K562 (cell line): ENCODE measurements at regions of chr1 and their contacts with region 1.

Region 1: GRCh38 chr1:202716654-202717053 is 6.4 kb upstream of the SYT2 start:
- DNase-seq: no peak
- ATAC-seq: no peak
- H3K4me3 ChIP-seq: no peak overlapping the region
- H3K27ac ChIP-seq: no peak overlapping the region
- H3K4me1 ChIP-seq: no peaks in the 10 kb centered on the region
- H3K27me3 ChIP-seq: peaks cover 48 to 60% of the 10 kb centered on the region in 2 experiments
- CTCF ChIP-seq: no peak
- EP300 ChIP-seq: no peak
- POLR2A ChIP-seq: no peak
- RAD21 ChIP-seq: no peak

Region 2: DNA sequence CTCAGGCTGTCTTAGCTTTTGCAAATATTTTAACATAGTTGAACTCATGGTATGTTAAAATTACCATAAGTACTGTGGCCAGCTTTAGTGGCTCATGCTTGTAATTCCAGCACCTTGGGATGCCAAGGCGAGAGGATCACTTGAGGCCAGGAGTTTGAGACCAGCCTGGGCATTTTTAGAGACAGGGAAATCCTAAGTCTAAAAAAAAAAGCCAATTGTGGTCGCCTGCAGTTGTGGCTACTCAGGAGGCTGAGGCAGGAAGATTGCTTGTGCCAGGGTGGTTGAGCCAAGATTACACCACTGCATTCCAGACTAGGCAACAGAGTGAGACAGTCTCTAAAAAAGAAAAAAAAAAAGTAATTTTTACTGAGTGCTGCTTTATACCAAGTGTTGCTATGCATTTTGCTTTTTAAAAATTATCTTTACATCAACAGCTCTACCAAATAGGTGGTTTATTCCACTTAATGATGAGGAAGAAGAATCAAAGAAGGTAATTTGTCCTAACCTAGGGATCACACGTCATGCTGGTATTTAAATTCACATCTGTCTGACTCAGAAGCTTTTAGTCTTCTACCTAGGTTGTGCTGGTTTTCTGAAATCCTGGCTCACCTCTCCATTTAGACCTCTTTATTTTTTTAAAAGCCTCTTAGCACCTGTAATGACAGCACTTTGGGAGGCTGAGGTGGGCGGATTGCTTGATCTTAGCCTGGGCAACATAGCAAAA is 351.4 kb before region 1 on chr1:
- CTCF ChIA-PET with region 1: no interaction called
- POLR2A ChIA-PET with region 1: no interaction called
- in situ Hi-C with region 1: no loop called
- intact Hi-C with region 1: no loop called
- DNase-seq: no peak
- ATAC-seq: no peak
- H3K4me3 ChIP-seq: no peak overlapping the region
- H3K27ac ChIP-seq: no peak overlapping the region
- H3K4me1 ChIP-seq: no peaks in the 10 kb centered on the region
- H3K27me3 ChIP-seq: no peaks in the 10 kb centered on the region
- CTCF ChIP-seq: no peak
- EP300 ChIP-seq: no peak
- POLR2A ChIP-seq: no peak
- RAD21 ChIP-seq: no peak

Region 3: GRCh38 chr1:202565890-202566602 is 150.6 kb before region 1 on chr1:
- CTCF ChIA-PET with region 1: no interaction called
- POLR2A ChIA-PET with region 1: no interaction called
- in situ Hi-C with region 1: no loop called
- intact Hi-C with region 1: no loop called
- DNase-seq: no peak
- ATAC-seq: no peak
- H3K4me3 ChIP-seq: no peak overlapping the region
- H3K27ac ChIP-seq: no peak overlapping the region
- H3K4me1 ChIP-seq: no peaks in the 10 kb centered on the region
- H3K27me3 ChIP-seq: no peaks in the 10 kb centered on the region
- CTCF ChIP-seq: peak in 1 of 3 experiments; percentile 31; a peak in 2 of 6 replicates
- EP300 ChIP-seq: no peak
- POLR2A ChIP-seq: no peak
- RAD21 ChIP-seq: peak in 1 of 2 experiments; percentile 20; a peak in 1 of 4 replicates

Region 4: GRCh38 chr1:202576816-202577215 is 139.8 kb before region 1 on chr1:
- CTCF ChIA-PET with region 1: no interaction called
- POLR2A ChIA-PET with region 1: no interaction called
- in situ Hi-C with region 1: no loop called
- intact Hi-C with region 1: loop called (anchors 5 kb)
- DNase-seq: no peak
- ATAC-seq: no peak; the same call in 2 of the 3 replicates
- H3K4me3 ChIP-seq: no peak overlapping the region
- H3K27ac ChIP-seq: no peak overlapping the region
- H3K4me1 ChIP-seq: peaks cover 0 to 10% of the 10 kb centered on the region in 2 experiments; a peak in 2 of 5 replicates
- H3K27me3 ChIP-seq: no peaks in the 10 kb centered on the region
- CTCF ChIP-seq: no peak
- EP300 ChIP-seq: no peak
- POLR2A ChIP-seq: no peak
- RAD21 ChIP-seq: no peak

Region 5: GRCh38 chr1:202656951-202657646 is 59.6 kb before region 1 on chr1:
- CTCF ChIA-PET with region 1: no interaction called
- POLR2A ChIA-PET with region 1: interaction called, 4 read pairs
- in situ Hi-C with region 1: no loop called
- intact Hi-C with region 1: loop called (anchors 1 kb)
- DNase-seq: peak; percentile 58 to 80 (median 70)
- ATAC-seq: peak; percentile 83
- H3K4me3 ChIP-seq: no peak overlapping the region
- H3K27ac ChIP-seq: no peak overlapping the region
- H3K4me1 ChIP-seq: no peaks in the 10 kb centered on the region
- H3K27me3 ChIP-seq: peaks cover 27 to 81% of the 10 kb centered on the region in 2 experiments
- CTCF ChIP-seq: peak; percentile 29 to 49 (median 31); a peak in 4 of 6 replicates
- EP300 ChIP-seq: no peak
- POLR2A ChIP-seq: no peak
- RAD21 ChIP-seq: no peak

Region 6: DNA sequence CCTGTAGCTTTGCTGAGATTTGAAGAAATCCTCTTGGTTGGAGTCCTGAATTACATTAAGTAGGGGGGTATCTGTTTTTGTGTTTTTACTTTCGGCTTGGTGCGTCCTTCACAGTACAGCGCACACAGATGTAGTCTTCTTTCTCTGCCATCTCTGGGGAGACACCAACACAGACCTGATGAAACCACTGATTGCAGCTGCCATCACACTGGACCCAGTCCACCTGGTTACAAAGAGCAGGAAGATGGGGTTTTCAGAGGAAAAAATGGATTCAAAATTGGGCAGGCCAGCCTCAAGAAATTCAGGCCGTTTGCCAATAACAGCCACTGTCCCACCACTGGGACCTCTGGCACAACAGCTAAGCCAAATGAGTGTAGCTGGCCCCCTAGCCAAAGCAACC is 12.3 kb after region 1 on chr1:
- CTCF ChIA-PET with region 1: interaction called, 3 read pairs
- POLR2A ChIA-PET with region 1: interaction called, 10 read pairs
- in situ Hi-C with region 1: no loop called
- intact Hi-C with region 1: no loop called
- DNase-seq: no peak
- ATAC-seq: no peak
- H3K4me3 ChIP-seq: no peak overlapping the region
- H3K27ac ChIP-seq: no peak overlapping the region
- H3K4me1 ChIP-seq: no peaks in the 10 kb centered on the region
- H3K27me3 ChIP-seq: no peaks in the 10 kb centered on the region
- CTCF ChIP-seq: no peak
- EP300 ChIP-seq: no peak
- POLR2A ChIP-seq: no peak
- RAD21 ChIP-seq: no peak